Heart right ventricle (tissue), 16 donors: ENCODE measurements at regions of chr19 and their contacts with region 1.

Region 1: GRCh38 chr19:53195265-53195903 is 2.2 kb upstream of the ZNF665 start:
- DNase-seq: peak; percentile 53 to 83
- ATAC-seq: peak in 7 of 8 donors; percentile 30 to 69 (median 56)
- H3K4me3 ChIP-seq: no peak overlapping the region
- H3K27ac ChIP-seq: no peak overlapping the region
- H3K4me1 ChIP-seq: peaks cover 3 to 31% (median 14%) of the 10 kb centered on the region in 9 donors
- H3K27me3 ChIP-seq: no peaks in the 10 kb centered on the region
- CTCF ChIP-seq: peak; percentile 82 to 97 (median 88)

Region 2: GRCh38 chr19:52993323-52994178 is 201.8 kb before region 1 on chr19:
- intact Hi-C with region 1: loop called in 1 of 10 experiments (anchors 10 kb)
- DNase-seq: peak; percentile 76 to 83
- ATAC-seq: peak; percentile 92 to 97 (median 94)
- H3K4me3 ChIP-seq: peak overlapping the region; percentile 29 to 68 (median 56)
- H3K27ac ChIP-seq: peak overlapping the region in 9 of 10 donors; percentile 40 to 71 (median 55)
- H3K4me1 ChIP-seq: peaks cover 0 to 20% (median 8%) of the 10 kb centered on the region in 9 donors
- H3K27me3 ChIP-seq: no peaks in the 10 kb centered on the region
- CTCF ChIP-seq: peak; percentile 55 to 85 (median 79)

Region 3: GRCh38 chr19:53055117-53055516 is 140.3 kb before region 1 on chr19:
- intact Hi-C with region 1: no loop called
- DNase-seq: no peak
- ATAC-seq: no peak
- H3K4me3 ChIP-seq: no peak overlapping the region
- H3K27ac ChIP-seq: no peak overlapping the region
- H3K4me1 ChIP-seq: peaks cover 0 to 13% (median 6%) of the 10 kb centered on the region in 9 donors
- H3K27me3 ChIP-seq: peaks cover 0 to 16% (median 0%) of the 10 kb centered on the region in 7 donors
- CTCF ChIP-seq: no peak

Region 4: DNA sequence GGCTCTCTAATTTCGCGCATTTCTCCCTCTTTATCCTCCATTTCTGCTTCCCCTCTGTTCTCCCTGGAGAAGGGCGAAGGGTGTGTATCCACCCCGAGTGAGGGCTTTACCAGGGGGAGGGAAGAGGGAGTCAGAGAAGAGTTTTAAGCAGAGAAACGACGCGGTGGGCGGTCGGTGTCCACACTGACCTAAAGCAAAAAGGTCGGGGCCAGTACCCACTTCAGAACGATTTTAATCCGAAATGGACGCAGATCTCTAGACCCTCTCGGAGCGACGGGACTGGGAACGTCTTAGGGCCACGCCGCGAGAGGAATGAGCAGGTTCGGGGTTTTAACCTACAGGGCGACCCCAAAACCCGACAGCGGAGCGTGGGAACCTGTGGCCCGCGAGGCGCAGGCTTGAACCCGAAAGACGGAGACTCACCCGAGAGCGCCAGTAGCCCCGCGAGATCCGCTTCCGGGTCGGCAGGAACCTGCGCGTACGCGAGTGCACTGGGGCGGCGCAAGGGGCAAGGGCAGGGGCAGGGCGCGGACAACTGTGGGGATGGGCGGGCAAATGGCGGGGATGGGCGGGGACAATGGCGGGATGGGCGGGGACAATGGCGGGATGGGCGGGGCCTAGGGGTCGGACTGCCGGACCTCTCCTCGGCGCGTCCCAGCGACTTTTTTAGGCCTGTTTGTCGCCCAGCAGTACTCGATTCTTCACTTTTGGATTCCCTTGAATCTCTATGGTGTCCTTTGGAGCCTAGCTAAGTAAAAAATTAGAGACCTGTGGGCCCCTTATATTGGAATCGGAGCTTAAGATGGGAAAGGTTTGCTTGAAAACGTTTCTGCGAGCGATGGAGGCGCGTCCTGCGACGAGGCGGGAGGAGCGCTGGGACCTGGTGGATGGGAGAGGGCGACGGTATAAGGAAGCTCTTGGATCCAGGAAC is 59.3 kb after region 1 on chr19 and contains the start of gene ZNF677:
- intact Hi-C with region 1: loop called in 5 of 10 experiments (anchors 5 to 10 kb)
- DNase-seq: peak; percentile 94 to 95
- ATAC-seq: peak; percentile 100
- H3K4me3 ChIP-seq: peak within 1 kb of the TSS; percentile 67 to 95 (median 87)
- H3K27ac ChIP-seq: peak within 1 kb of the TSS; percentile 55 to 92 (median 85)
- H3K4me1 ChIP-seq: peaks cover 0 to 20% (median 14%) of the 10 kb centered on the region in 9 donors
- H3K27me3 ChIP-seq: no peaks in the 10 kb centered on the region
- CTCF ChIP-seq: no peak
- total RNA-seq, gene ZNF677: 16.9 to 28.0 (median 22.5) TPM

Region 5: GRCh38 chr19:53357821-53358581 is 162.6 kb after region 1 on chr19:
- intact Hi-C with region 1: loop called in 7 of 10 experiments (anchors 5 to 10 kb)
- DNase-seq: peak in 1 of 2 donors; percentile 27
- ATAC-seq: peak in 2 of 8 donors; percentile 20 to 44
- H3K4me3 ChIP-seq: no peak overlapping the region
- H3K27ac ChIP-seq: no peak overlapping the region
- H3K4me1 ChIP-seq: no peaks in the 10 kb centered on the region
- H3K27me3 ChIP-seq: no peaks in the 10 kb centered on the region
- CTCF ChIP-seq: no peak

Region 6: DNA sequence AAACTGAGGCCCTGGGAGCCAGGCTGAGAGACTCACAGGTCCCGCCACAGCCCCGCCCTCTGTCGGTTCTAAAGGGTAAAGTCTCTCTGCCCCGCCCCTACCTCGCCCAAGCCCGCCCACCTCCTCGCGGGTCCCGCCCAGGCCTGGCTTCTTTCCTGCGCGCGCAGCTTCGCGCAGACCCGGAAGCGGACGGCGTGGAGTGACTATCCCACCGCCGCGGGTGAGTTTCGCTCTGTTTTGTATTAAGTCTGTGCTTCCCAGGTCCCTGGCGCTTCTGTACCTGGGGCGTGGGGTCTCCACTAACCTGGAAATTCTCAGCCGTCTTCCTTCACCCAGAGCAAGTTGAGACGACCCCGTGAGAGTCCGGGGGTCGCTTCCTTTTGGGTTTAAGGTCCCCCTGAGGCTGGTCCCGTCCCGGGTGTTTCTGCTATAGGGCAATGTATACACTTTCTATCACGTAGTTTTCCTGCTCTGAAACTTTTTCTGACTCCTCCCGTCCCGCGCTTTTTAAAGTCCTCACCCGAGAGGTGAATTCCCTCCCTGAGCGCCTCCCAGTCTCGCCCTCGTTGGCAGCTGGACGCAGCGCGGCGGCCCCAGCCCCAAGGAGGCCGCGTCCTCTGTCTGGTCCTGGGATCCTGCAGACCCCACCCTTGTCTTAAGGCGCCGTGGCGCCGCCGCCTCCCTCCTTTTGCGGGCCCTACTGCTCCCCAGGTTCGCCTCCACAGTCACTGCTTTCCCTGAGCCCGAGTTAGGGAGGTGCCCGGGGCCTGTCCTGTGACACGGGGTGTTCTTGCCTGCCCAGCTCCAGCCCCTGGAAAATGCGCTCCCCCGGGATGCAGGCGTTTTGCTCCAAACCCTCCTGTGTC is 199.8 kb after region 1 on chr19 and contains the start of gene ZNF765:
- intact Hi-C with region 1: loop called in 3 of 10 experiments (anchors 10 kb)
- DNase-seq: peak; percentile 94 to 95
- ATAC-seq: peak; percentile 99 to 100 (median 100)
- H3K4me3 ChIP-seq: peak within 1 kb of the TSS; percentile 65 to 94 (median 79)
- H3K27ac ChIP-seq: peak within 1 kb of the TSS; percentile 11 to 88 (median 76)
- H3K4me1 ChIP-seq: peaks cover 0 to 25% (median 22%) of the 10 kb centered on the region in 9 donors
- H3K27me3 ChIP-seq: peaks cover 0 to under 1% (median 0%) of the 10 kb centered on the region in 7 donors
- CTCF ChIP-seq: peak; percentile 56 to 77 (median 63)
- total RNA-seq, gene ZNF765: 2.6 to 5.4 (median 4.1) TPM

Region 7: DNA sequence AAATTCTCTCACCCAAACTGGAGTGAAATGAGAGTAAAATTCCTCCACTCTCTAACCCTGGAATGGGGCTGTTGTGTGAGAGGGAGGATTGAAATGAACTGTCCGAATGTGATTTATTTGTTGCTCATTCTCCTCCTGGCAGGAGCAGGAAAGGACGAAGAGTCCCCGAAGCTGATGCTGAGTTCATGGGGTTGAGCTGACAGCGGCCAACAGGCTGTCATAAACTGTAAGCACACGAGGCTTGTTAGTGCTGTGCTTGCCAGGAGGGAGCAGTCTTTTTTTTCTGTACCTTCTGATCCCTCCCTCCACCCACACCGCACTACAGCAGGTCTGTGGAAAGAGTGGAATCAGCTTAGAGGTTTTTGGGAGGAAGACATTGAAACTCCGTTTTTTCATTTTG is 309.5 kb after region 1 on chr19:
- intact Hi-C with region 1: loop called in 6 of 10 experiments (anchors 5 to 10 kb)
- DNase-seq: no peak
- ATAC-seq: peak in 2 of 8 donors; percentile 24 to 45
- H3K4me3 ChIP-seq: peak overlapping the region in 8 of 10 donors; percentile 8 to 51 (median 40)
- H3K27ac ChIP-seq: peak overlapping the region in 2 of 10 donors; percentile 3 to 70
- H3K4me1 ChIP-seq: peaks cover 0 to 8% (median 7%) of the 10 kb centered on the region in 9 donors
- H3K27me3 ChIP-seq: peaks cover 0 to 27% (median 7%) of the 10 kb centered on the region in 7 donors
- CTCF ChIP-seq: no peak

Region 8: GRCh38 chr19:53520550-53521372 is 325.4 kb after region 1 on chr19:
- intact Hi-C with region 1: loop called in 3 of 10 experiments (anchors 10 kb)
- DNase-seq: peak; percentile 95 to 98
- ATAC-seq: peak; percentile 96 to 100 (median 99)
- H3K4me3 ChIP-seq: peak overlapping the region; percentile 14 to 73 (median 52)
- H3K27ac ChIP-seq: peak overlapping the region; percentile 74 to 88 (median 82)
- H3K4me1 ChIP-seq: peaks cover 0 to 25% (median 14%) of the 10 kb centered on the region in 9 donors
- H3K27me3 ChIP-seq: no peaks in the 10 kb centered on the region
- CTCF ChIP-seq: no peak